GM13977 (cell line): ENCODE measurements at regions of chr7 and their contacts with region 1.

Region 1: DNA sequence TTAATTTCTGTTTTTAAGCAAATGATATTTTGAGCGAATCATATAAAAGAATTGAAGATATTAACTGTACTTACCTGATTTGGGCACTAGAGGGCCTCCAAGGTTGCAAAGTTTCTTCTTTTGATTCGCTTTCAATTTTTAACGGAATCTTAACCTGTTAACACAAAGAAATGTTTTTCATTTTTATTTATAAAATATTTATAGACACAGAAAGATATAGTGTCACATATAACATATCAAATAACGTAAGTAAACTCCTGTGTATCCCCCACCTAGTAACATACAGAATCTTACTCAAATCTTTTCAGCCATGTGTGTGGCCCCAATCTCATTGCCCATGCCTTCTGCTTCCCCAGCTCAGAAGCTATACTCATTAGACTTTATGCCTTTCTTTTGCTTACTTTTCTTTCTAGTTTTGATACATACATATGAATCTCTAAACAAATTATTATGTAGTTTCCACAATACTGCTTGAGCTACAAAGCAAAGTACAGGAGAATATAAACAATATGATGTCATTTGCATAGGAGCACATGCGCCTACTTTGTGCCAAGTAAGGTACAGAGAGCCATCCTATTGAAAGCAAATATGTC is 49.5 kb upstream of the ZPBP start:
- DNase-seq: no peak
- CTCF ChIP-seq: peak; percentile 64

Region 2: GRCh38 chr7:50369143-50370026 is 226.9 kb after region 1 on chr7:
- in situ Hi-C with region 1: loop called (anchors 25 kb)
- DNase-seq: peak; percentile 43
- CTCF ChIP-seq: peak; percentile 72

Region 3: DNA sequence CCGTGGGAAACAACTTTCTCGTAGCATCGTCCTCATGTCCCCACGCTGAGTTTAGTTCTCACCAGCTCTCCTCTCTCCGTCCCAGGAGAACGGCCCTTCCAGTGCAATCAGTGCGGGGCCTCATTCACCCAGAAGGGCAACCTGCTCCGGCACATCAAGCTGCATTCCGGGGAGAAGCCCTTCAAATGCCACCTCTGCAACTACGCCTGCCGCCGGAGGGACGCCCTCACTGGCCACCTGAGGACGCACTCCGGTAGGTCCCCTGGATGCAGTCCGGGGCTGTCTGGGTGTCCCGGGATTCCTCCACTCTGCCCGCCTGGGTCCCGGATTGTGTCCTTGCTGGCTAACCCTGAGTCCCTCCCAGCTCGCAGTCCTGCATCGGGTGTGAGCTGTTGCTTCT is 239.9 kb after region 1 on chr7:
- in situ Hi-C with region 1: no loop called
- DNase-seq: no peak
- CTCF ChIP-seq: no peak

Region 4: GRCh38 chr7:51299391-51300133 is 1157.0 kb after region 1 on chr7:
- in situ Hi-C with region 1: no loop called
- DNase-seq: no peak
- CTCF ChIP-seq: no peak